PC-3 (cell line): ENCODE measurements at regions of chrX and their contacts with region 1.

Region 1: DNA sequence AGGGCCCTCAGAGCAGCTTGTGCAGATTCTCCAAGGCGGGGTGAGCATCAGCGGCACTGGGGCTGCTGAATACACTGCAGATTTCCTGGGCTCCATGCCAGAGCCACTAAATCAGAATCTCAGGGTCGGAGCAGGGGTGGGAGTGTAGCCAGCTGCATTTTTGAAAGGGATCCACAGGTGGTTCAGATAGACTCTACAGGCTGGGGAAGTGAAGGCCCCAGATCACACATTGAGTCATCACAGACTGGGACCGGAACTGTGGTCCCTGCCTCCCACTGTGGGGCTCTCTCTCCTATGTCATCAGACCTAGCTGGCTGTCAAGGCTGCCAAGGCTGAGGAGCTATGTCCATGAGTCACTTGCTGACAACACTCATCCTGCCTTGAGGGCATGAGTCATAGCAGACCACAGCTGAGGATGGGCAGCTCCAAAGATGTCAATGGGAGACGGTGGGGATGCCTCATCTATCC is 162.3 kb upstream of the MAMLD1 start:
- DNase-seq: peak; percentile 98
- ATAC-seq: peak; percentile 94
- H3K4me3 ChIP-seq: no peak overlapping the region
- H3K27ac ChIP-seq: peak overlapping the region; percentile 89
- H3K4me1 ChIP-seq: peaks cover 37% of the 10 kb centered on the region
- H3K27me3 ChIP-seq: no peaks in the 10 kb centered on the region
- CTCF ChIP-seq: no peak

Region 2: GRCh38 chrX:149962859-149963757 is 237.7 kb before region 1 on chrX:
- CTCF ChIA-PET with region 1: no interaction called
- POLR2A ChIA-PET with region 1: no interaction called
- intact Hi-C with region 1: loop called (anchors 5 kb)
- DNase-seq: peak; percentile 77
- ATAC-seq: peak; percentile 96
- H3K4me3 ChIP-seq: no peak overlapping the region
- H3K27ac ChIP-seq: no peak overlapping the region
- H3K4me1 ChIP-seq: 0 out of 2 replicates have a peak, but pooled peaks cover 6% of the 10 kb centered on the region
- H3K27me3 ChIP-seq: no peaks in the 10 kb centered on the region
- CTCF ChIP-seq: peak; percentile 88

Region 3: DNA sequence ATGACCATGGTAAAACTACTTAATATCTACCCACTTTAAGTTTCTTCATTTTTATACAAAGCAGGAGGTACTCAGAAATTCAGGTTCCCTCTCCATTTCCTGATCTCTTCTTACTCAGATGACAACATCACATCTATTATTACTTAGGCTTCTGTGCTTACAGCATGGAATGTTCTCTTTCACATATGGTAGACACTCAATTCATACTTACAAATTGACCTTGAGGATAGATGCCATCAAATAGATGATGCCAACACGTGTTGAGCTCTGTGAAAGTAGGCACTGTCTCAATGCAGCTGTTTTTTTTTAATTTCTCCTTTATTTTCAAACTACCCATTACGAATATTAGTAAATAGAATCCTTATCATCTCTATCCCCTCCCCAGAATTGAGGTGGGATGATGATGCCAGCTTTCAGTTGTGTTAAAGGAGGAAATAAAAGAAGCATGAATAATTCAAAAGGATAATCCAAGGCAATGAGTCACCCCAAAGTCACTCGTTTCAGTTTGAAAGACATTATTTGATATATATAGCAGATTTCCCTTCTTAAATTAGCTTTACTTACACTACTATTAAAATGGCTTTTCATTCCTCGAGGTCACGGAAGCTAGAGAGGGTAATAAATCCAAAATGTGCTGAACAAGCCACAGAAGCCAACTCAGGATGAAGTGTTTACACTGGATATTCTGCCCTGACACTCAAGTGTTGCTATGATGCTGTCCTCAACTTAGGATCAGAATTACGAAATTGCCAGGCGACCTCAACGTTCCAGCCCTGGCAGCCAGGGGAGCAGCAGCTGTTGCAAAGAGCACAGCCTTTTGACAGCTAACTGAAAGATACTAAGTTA is 138.3 kb before region 1 on chrX:
- CTCF ChIA-PET with region 1: no interaction called
- POLR2A ChIA-PET with region 1: no interaction called
- intact Hi-C with region 1: loop called (anchors 2 kb)
- DNase-seq: peak; percentile 78
- ATAC-seq: peak; percentile 89
- H3K4me3 ChIP-seq: no peak overlapping the region; the same call in 1 of the 2 replicates
- H3K27ac ChIP-seq: peak overlapping the region; percentile 67
- H3K4me1 ChIP-seq: peaks cover 35% of the 10 kb centered on the region
- H3K27me3 ChIP-seq: no peaks in the 10 kb centered on the region
- CTCF ChIP-seq: no peak

Region 4: DNA sequence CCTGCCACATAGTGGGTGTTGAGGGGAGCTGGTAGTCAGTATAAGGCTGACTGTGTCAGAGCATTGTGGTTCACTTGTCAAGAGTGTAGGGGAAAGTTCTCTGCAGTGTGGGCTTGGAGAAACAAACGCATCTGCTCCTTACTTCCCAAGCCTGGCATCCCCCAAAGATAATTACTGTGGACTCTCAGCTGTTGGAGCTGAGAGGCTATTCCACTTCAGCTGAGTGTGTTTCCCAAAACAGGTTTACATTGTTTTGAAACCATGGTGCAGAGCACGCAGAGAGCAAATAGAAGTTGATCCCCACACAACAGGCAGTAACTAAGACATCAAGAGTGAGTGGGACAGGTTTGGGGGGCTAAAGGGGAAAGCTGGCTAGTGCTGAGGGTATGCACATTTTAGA is 81.5 kb before region 1 on chrX:
- CTCF ChIA-PET with region 1: no interaction called
- POLR2A ChIA-PET with region 1: no interaction called
- intact Hi-C with region 1: loop called (anchors 2 kb)
- DNase-seq: no peak
- ATAC-seq: no peak
- H3K4me3 ChIP-seq: no peak overlapping the region
- H3K27ac ChIP-seq: no peak overlapping the region
- H3K4me1 ChIP-seq: no peaks in the 10 kb centered on the region
- H3K27me3 ChIP-seq: no peaks in the 10 kb centered on the region
- CTCF ChIP-seq: no peak

Region 5: DNA sequence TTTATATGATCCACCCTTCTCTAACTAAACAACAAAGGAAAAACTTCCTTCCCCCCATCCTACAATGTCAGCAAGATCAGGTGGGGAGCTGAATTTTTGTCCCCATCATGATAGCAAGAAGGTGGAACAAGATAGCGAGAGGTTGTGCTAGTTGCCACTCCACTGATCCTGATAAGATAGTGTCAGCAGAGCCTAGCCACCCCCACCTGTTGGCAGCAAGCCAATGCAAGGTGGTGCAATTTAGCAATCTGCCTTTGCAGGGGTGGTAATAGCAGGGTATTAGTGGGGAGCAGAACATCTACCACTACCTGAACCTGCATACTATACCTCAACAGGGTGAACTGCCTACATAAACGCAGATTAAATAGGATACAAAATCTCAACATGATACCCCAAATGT is 82.1 kb after region 1 on chrX:
- CTCF ChIA-PET with region 1: no interaction called
- POLR2A ChIA-PET with region 1: no interaction called
- intact Hi-C with region 1: no loop called
- DNase-seq: no peak
- ATAC-seq: no peak
- H3K4me3 ChIP-seq: no peak overlapping the region
- H3K27ac ChIP-seq: no peak overlapping the region
- H3K4me1 ChIP-seq: no peaks in the 10 kb centered on the region
- H3K27me3 ChIP-seq: no peaks in the 10 kb centered on the region
- CTCF ChIP-seq: no peak

Region 6: DNA sequence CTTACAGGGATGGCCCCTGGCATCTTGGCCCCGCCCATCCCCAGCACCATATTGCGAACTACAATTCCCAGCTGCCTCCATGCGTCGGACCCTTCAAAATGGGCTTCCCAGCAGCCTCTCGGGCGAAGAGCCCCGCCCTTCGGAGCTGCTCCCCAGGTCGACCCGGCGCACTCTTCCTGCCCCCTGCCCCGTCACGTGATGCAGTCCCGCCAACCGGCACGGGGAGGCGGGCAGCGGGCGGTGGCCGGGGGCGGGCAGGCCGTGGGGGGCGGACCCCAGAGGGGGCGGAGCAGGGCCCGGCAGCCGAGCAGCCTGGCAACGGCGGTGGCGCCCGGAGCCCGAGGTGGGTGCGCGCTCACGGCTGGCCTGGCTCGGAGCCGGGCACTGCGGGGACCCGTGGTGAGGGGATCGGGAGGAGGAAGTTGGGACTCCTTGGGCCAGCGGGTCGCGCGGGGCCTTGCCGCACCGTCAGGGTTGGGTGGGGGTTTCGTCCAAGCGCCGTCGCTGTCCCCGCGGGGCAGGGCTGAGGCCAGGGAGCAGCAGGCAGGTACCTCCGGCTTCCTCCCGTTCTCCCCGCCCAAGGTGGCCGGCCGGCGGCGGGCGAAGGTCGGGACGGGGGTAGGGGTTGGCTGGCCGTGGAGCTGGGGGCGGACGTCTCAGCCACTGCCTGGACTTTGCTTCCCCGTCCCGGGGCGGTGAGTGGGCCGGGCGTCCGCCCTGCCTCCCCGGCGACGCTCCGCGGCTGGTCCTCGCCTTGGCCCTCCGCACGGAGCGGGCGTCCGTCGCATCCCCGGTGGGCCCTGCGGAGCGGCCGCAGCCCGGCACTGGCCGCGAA is 367.7 kb after region 1 on chrX and contains the start of gene MTM1:
- CTCF ChIA-PET with region 1: interaction called, 10 read pairs
- POLR2A ChIA-PET with region 1: no interaction called
- intact Hi-C with region 1: no loop called
- DNase-seq: peak; percentile 96
- ATAC-seq: peak; percentile 85
- H3K4me3 ChIP-seq: peak within 1 kb of the TSS; percentile 83
- H3K27ac ChIP-seq: peak within 1 kb of the TSS; percentile 11; the same call in 1 of the 2 replicates
- H3K4me1 ChIP-seq: peaks cover 42% of the 10 kb centered on the region
- H3K27me3 ChIP-seq: no peaks in the 10 kb centered on the region
- CTCF ChIP-seq: no peak
- total RNA-seq, gene MTM1: 5.5 and 13.7 TPM in 2 replicates